Activated T-helper 1 cell treated with anti-CD3 and anti-CD28 coated beads, Interleukin-12 subunit alpha, Interleukin-12 subunit beta, Interleukin-2, Interleukin-4 antibody, amounts not matched to agents 30 ng/mL and 10 ng/mL and 1 ng/mL, durations not matched to agents 14 hours and 24 hours and 36 hours (primary cell): ENCODE measurements at regions of chr2 and their contacts with region 1.

Region 1: DNA sequence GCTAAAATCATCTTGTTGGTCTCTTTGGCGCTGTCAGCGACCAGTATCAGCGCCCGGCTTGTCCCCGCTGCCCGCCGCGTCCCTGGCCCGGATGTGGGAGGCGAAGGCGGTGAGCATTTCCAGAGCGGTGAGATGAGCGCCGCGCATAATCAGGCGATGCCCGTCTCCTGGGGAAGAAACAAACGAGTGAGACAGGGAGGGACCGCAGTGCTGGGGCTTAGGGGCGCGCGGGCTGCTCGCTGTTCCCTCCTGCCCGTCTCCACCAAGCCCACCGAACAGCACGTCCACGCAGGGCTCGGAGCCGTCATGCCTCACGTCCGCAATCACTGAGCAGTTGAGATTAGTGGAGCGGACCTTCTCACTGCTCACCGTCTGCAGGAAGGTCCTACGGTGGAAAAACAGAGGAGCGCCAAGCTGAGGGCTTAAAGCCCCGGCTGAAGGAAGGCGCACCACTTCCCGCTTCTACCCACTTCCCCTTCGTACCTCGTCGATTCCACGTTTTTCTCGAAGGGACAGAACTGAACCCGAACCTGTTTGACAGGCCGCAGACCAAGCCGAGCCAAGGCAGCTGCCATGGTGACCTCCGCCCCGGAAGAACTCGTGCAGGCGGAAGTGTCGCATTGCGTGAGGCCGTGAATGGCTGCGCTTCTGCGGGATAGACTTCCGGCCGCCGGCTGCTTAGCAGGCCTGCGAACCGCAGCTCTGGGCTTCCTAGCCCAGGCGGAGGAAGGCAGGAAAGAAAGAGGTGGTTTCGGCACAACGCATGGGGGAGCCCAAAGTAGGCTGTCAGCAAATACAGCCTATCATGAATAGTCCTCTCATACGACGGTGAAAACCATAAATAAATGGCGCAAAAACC is at the start of gene MRPL53:
- DNase-seq: peak; percentile 95
- H3K4me3 Mint-ChIP-seq: peak within 1 kb of the TSS; percentile 99
- H3K27ac Mint-ChIP-seq: peak within 1 kb of the TSS; percentile 94
- H3K4me1 Mint-ChIP-seq: peaks cover 21% of the 10 kb centered on the region
- H3K27me3 Mint-ChIP-seq: peaks cover 2% of the 10 kb centered on the region
- total RNA-seq, gene MRPL53: 118 and 124 TPM in 2 replicates

Region 2: DNA sequence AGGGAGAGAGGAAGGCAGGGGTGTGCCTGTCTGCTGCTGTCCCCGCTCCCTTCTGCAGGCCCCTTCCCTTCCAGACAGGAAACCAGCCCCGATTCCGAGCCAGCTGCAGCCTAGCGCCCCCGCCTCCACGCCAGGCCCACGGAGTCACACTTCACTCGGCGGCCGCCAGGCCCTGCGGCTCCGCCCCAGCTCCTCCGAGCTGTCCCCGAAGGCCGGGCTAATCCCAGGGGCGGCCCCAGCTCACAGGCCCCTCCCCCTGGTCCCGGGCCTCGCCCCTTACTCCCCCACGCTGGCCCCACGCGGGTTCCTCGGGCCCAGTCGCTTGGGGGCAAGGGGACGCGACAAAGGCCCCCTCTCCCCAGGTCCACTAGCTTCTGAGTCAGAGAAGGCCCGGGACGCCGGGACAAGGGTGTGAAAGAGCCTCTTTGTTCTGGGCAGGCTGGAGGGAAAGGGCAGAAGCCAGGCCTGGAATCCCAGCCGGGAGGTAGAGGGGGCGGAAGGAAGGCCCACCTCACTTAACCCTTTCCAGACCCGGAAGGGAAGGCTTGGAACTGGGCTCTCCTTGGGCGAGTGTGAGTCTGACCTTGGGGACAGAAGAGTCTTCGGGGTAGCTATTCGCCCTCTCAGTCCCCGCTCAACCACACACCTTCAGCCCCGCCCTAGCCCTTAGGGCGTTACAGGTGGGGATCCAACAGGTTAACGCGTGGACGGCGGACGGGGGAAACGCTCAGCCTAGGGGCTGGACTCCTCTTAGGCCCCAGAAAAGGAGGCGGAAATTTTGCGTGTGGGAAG is 31.7 kb before region 1 on chr2:
- intact Hi-C with region 1: no loop called
- DNase-seq: peak; percentile 37
- H3K4me3 Mint-ChIP-seq: peak overlapping the region; percentile 73
- H3K27ac Mint-ChIP-seq: no peak overlapping the region
- H3K4me1 Mint-ChIP-seq: peaks cover 22% of the 10 kb centered on the region
- H3K27me3 Mint-ChIP-seq: peaks cover 36% of the 10 kb centered on the region

Region 3: GRCh38 chr2:74507145-74507925 is 35.0 kb after region 1 on chr2 and contains the start of gene PCGF1:
- intact Hi-C with region 1: loop called (anchors 1 kb)
- DNase-seq: peak; percentile 96
- H3K4me3 Mint-ChIP-seq: peak within 1 kb of the TSS; percentile 96
- H3K27ac Mint-ChIP-seq: peak within 1 kb of the TSS; percentile 99
- H3K4me1 Mint-ChIP-seq: peaks cover 55% of the 10 kb centered on the region
- H3K27me3 Mint-ChIP-seq: peaks cover 24% of the 10 kb centered on the region
- total RNA-seq, gene PCGF1: 41.9 and 45.0 TPM in 2 replicates